ACHN (cell line): ENCODE measurements at regions of chr11 and their contacts with region 1.

Region 1: GRCh38 chr11:13210424-13210823 is 67.2 kb upstream of the BMAL1 start:
- DNase-seq: peak; percentile 77

Region 2: DNA sequence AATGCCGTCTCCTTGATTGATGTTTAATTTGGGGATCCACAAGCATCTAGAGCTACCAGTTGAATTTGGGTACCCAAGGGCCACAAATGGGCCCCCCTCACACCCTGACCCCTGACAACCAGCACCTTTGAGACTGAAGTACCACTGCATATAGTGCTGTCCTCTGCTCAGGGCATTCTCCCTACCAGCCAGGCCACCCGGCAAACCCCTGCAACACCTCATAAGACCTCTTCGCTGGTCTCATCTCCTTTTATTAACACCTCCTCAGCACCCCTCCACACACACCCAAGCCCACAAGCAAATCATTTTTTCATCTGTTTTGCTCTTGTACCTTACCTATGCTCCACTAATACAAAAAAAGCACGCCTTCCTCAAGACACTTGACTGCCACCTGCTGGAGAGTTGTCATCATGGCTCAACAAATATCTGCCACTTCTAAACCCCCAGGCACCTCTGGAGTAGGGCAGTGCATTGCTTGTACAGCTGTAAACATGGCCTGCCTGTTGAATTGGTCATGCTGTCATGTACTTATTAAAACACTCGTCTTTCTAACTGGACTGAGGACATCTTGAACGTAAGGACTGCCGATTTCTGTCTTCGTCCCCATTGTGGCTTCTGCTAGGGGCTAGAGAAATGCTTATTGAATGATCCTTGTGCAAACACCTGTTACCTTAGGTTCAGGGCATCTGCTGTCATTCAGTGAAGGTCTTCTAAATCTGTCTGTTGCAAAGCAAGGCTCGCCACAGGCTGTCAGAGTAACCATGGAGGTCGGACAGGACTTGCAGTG is 133.7 kb after region 1 on chr11:
- in situ Hi-C with region 1: loop called (anchors 25 kb)
- DNase-seq: peak; percentile 74